ENCODE measurements at regions of chr5 and their contacts with region 1.

Region 1: DNA sequence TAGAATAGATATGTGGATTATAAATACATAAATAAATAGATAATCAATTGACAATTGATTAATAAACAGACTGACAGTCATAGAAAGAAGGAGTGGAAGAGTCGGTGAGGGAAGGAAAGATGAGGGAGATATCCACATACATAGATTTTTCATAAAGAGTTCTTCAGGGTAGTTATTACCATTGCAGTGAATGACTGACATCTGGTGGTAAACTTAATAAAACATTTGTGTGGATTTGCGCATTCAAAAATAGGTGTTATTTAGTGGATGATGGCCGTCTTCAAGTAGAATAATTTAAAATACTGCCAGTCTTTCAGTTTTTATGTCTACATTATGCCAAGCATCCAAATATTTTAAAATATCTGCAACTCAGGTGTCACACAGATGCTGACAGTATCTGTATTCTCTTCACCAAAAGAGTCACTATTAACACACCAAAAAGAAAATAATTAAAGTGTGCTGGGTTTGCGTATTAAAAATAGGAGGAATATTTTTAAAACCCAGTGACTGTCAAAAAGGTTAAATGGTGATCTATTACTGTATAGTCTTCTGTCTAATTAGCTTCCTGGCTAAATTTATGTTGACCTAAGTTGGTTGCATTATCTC is 78.8 kb downstream of the GIN1 start:
- DNase-seq: no peak
- H3K4me3 ChIP-seq: no peak overlapping the region
- H3K27ac ChIP-seq: no peak overlapping the region
- H3K4me1 ChIP-seq: no peaks in the 10 kb centered on the region
- H3K27me3 ChIP-seq: no peaks in the 10 kb centered on the region
- CTCF ChIP-seq: peak; percentile 71

Region 2: DNA sequence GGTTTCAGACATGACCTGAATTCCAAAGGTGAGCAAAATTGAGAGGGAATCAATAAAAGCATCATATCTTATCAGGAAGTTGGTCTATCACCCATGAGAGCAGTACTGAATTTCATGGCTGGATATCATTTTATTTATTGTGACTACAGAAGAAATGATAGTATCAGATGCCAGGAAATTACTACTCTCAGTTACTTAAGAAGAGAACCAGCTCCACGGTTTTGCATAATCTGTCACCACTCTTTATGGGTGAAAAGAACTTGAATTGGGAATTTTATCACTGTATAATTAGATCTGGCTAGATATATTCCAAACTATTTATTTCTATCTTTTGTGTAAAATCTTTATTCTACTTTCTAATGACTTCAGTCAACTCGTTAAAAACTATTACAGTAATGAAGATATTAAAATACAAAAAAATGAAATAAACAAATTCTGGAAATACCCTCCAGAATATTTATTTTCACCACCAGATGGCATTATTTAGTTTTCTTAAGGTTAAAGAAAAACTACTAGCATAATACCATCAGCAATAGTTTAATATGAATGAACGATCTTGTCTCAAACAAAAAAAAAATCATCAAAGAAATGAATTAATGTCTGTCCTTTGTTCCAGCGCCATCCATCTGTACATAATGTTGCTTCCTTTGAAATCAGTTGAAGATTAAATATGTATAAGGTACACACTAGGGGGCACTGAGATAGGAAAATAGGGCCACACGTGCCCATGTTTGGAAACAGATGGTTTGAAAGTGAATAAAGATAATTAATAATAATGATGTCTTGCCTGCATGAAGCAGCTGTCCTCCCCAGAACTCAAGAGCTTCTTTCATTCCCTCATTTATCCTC is 457.7 kb before region 1 on chr5:
- intact Hi-C with region 1: loop called (anchors 5 kb)
- DNase-seq: no peak
- H3K4me3 ChIP-seq: no peak overlapping the region
- H3K27ac ChIP-seq: no peak overlapping the region
- H3K4me1 ChIP-seq: peaks cover 7% of the 10 kb centered on the region
- H3K27me3 ChIP-seq: no peaks in the 10 kb centered on the region
- CTCF ChIP-seq: peak; percentile 58

Region 3: GRCh38 chr5:102681407-102681983 is 359.7 kb before region 1 on chr5:
- intact Hi-C with region 1: loop called (anchors 5 kb)
- DNase-seq: peak; percentile 32
- H3K4me3 ChIP-seq: no peak overlapping the region
- H3K27ac ChIP-seq: no peak overlapping the region
- H3K4me1 ChIP-seq: no peaks in the 10 kb centered on the region
- H3K27me3 ChIP-seq: no peaks in the 10 kb centered on the region
- CTCF ChIP-seq: peak; percentile 85

Measured in left ventricle myocardium inferior (tissue), 1 donor.